ENCODE measurements at regions of chr7 and their contacts with region 1.

Region 1: DNA sequence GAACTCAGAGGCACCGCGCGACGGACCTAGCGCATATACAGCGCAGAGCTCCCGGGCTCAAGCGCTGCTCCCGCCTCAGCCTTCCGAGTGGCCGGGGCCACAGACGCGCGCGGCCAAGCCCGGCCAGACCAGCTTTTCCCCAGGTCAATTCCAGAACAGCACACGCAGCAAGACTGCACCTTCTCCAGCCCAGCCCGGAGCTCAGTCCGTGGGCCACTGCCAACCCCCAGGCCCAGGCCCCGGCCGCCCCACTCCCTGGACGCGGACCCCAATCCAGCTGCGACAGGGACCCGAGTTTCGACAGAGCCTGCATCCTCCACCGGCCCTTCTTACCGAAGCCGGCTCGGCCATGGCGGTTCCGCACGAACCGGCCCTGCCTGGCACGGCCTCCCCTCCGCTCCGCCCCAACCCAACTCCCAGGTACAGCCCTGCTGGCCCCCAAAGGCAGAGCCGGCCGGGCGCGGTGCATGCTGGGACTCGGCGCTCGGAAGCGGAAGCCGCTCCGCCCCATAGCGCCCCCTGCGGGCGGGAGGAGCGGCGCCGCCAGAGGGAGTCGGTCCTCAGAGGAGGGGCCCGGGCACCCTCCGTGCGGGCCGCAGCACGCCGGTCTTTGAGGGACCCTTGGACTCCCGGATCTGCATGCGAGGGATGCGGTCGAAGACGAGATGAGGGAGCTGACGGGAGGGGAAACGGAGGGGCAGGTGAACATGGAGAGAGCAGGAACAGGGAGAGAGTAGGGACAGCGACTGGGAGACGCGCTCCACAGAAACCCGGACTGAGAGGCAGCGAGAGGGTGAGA is at the start of gene ZNF425:
- DNase-seq: peak; percentile 98
- ATAC-seq: peak; percentile 82
- H3K4me3 Mint-ChIP-seq: peak within 1 kb of the TSS; percentile 98
- H3K27ac Mint-ChIP-seq: peak within 1 kb of the TSS; percentile 98
- H3K4me1 Mint-ChIP-seq: peaks cover 21% of the 10 kb centered on the region
- H3K27me3 Mint-ChIP-seq: no peaks in the 10 kb centered on the region
- CTCF ChIP-seq: peak; percentile 31
- total RNA-seq, gene ZNF425: 1.4 and 1.9 TPM in 2 replicates

Region 2: DNA sequence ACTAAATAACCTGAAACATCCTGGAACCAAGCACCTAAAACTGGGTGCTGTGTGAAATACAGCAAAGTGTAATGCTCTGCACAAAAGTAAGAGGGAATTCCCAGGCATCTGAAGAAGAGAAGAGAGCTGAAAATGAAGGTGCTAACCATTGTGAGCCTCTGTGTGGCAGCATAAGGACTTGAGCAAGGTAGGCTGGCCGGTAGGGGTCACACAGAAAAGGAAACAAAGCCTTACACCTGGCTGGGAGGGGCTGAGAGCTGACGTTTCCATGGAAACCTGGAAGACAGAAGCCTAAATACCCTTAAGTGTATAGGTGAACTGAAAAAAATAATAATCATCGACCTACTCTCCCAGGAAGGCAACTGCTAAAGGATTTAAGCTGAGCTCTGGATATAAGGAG is 378.8 kb before region 1 on chr7:
- CTCF ChIA-PET with region 1: no interaction called
- POLR2A ChIA-PET with region 1: no interaction called
- intact Hi-C with region 1: no loop called
- DNase-seq: no peak
- ATAC-seq: peak; percentile 31
- H3K4me3 Mint-ChIP-seq: no peak overlapping the region
- H3K27ac Mint-ChIP-seq: no peak overlapping the region
- H3K4me1 Mint-ChIP-seq: peaks cover 2% of the 10 kb centered on the region
- H3K27me3 Mint-ChIP-seq: no peaks in the 10 kb centered on the region
- CTCF ChIP-seq: no peak

Region 3: GRCh38 chr7:148987010-148987750 is 138.9 kb before region 1 on chr7:
- CTCF ChIA-PET with region 1: no interaction called
- POLR2A ChIA-PET with region 1: interaction called, 6 read pairs
- intact Hi-C with region 1: loop called (anchors 1 kb)
- DNase-seq: peak; percentile 60
- ATAC-seq: peak; percentile 85
- H3K4me3 Mint-ChIP-seq: peak overlapping the region; percentile 96
- H3K27ac Mint-ChIP-seq: peak overlapping the region; percentile 93
- H3K4me1 Mint-ChIP-seq: peaks cover 50% of the 10 kb centered on the region
- H3K27me3 Mint-ChIP-seq: peaks cover 2% of the 10 kb centered on the region
- CTCF ChIP-seq: no peak

Region 4: DNA sequence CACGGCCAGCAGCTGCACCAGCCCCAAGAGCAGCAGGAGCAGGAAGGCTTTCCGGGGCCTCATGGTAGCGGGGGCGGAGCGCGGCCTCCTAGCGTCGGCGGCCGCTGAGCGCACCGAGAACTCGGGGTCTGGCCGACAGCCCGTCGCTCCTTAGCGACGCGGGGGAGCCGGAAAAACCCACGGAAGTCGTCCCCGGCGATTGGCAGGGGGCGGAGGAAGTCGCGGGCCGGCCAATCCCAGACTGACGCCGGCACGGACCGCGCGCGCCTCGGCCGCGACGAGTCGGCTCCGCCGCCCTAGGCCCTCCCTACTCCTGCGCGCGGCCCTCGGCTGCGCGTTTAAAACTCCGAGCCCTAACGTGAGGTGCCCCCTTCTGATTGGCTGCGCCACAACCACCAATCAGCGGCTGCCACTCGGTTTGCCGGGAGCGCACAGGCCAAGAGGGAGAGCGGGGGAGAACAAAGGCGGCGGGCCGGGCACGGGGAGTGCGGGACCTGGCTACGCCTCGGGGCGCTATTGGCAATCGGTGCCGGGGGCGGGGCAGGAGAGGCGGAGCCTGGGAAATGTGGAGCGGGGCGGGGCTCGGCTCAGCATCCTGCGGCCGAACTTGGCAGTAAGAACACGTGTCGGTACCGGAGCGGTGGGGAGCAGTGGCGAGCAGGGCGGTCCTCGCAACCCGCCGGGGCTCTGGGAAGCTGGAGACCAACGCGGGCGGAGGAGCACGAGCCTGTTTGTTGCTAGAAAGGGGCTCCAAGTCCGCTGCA is 97.5 kb before region 1 on chr7 and contains the start of gene PDIA4:
- CTCF ChIA-PET with region 1: no interaction called
- POLR2A ChIA-PET with region 1: interaction called, 10 read pairs
- intact Hi-C with region 1: loop called (anchors 1 kb)
- DNase-seq: peak; percentile 99
- ATAC-seq: peak; percentile 87
- H3K4me3 Mint-ChIP-seq: peak within 1 kb of the TSS; percentile 92
- H3K27ac Mint-ChIP-seq: peak within 1 kb of the TSS; percentile 89
- H3K4me1 Mint-ChIP-seq: peaks cover 39% of the 10 kb centered on the region
- H3K27me3 Mint-ChIP-seq: no peaks in the 10 kb centered on the region
- CTCF ChIP-seq: no peak
- total RNA-seq, gene PDIA4: 57.4 and 59.4 TPM in 2 replicates

Region 5: DNA sequence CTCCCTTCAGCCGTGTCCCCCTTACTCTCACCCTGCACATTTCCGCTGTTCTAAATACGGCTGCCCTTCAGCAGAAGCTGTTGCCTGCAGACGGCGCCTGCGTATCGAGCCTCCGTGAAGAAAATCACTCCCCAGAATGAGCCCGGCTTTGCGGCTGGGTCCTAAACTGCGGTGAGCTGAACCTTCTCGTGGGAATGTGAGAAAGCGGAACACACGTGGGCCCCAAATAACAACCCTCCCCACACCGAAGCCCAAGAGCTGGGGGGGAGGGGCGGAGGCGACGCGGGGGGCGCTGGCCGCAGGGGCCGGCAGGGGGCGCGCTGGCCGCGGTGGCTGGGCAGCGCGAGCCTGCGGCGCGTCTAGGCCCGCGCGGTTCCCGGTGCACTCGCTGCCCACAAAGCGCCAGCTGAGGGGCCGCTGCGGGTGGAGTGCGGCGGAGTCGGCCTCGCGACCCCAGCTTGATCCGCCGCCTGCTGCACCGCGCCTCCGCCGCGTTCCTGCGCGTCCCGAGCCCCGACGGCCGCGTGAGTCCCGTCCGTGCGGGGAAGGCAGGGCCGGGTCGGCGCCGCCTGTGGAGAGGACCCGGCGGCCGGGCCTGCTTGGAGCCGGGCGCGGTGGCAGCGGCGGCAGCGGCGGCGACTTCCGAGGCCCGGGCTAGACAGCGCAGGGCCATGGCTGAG is 21.1 kb after region 1 on chr7 and contains the start of gene ZNF398:
- CTCF ChIA-PET with region 1: interaction called, 27 read pairs
- POLR2A ChIA-PET with region 1: interaction called, 66 read pairs
- intact Hi-C with region 1: loop called (anchors 1 kb)
- DNase-seq: peak; percentile 87
- ATAC-seq: peak; percentile 84
- H3K4me3 Mint-ChIP-seq: peak within 1 kb of the TSS; percentile 91
- H3K27ac Mint-ChIP-seq: peak within 1 kb of the TSS; percentile 94
- H3K4me1 Mint-ChIP-seq: peaks cover 32% of the 10 kb centered on the region
- H3K27me3 Mint-ChIP-seq: no peaks in the 10 kb centered on the region
- CTCF ChIP-seq: no peak
- total RNA-seq, gene ZNF398: 15.1 and 17.3 TPM in 2 replicates

Region 6: GRCh38 chr7:149239345-149240191 is 113.5 kb after region 1 on chr7 and contains the start of gene ZNF212:
- CTCF ChIA-PET with region 1: no interaction called
- POLR2A ChIA-PET with region 1: no interaction called
- intact Hi-C with region 1: loop called (anchors 1 kb)
- DNase-seq: peak; percentile 82
- ATAC-seq: peak; percentile 99
- H3K4me3 Mint-ChIP-seq: peak within 1 kb of the TSS; percentile 91
- H3K27ac Mint-ChIP-seq: peak within 1 kb of the TSS; percentile 76
- H3K4me1 Mint-ChIP-seq: peaks cover 37% of the 10 kb centered on the region
- H3K27me3 Mint-ChIP-seq: no peaks in the 10 kb centered on the region
- CTCF ChIP-seq: no peak
- total RNA-seq, gene ZNF212: 17.0 and 21.0 TPM in 2 replicates

Region 7: GRCh38 chr7:149497456-149498261 is 371.6 kb after region 1 on chr7 and contains the start of gene ZNF746:
- CTCF ChIA-PET with region 1: no interaction called
- POLR2A ChIA-PET with region 1: no interaction called
- intact Hi-C with region 1: loop called (anchors 5 kb)
- DNase-seq: peak; percentile 79
- ATAC-seq: peak; percentile 96
- H3K4me3 Mint-ChIP-seq: peak within 1 kb of the TSS; percentile 92
- H3K27ac Mint-ChIP-seq: peak within 1 kb of the TSS; percentile 82
- H3K4me1 Mint-ChIP-seq: peaks cover 24% of the 10 kb centered on the region
- H3K27me3 Mint-ChIP-seq: peaks cover 2% of the 10 kb centered on the region
- CTCF ChIP-seq: no peak
- total RNA-seq, gene ZNF746: 21.0 and 28.4 TPM in 2 replicates

Measured in activated B cell treated with CpG ODN at 0.5 μM for 24 hours (primary cell).